ENCODE measurements at regions of chr9 and their contacts with region 1.

Region 1: DNA sequence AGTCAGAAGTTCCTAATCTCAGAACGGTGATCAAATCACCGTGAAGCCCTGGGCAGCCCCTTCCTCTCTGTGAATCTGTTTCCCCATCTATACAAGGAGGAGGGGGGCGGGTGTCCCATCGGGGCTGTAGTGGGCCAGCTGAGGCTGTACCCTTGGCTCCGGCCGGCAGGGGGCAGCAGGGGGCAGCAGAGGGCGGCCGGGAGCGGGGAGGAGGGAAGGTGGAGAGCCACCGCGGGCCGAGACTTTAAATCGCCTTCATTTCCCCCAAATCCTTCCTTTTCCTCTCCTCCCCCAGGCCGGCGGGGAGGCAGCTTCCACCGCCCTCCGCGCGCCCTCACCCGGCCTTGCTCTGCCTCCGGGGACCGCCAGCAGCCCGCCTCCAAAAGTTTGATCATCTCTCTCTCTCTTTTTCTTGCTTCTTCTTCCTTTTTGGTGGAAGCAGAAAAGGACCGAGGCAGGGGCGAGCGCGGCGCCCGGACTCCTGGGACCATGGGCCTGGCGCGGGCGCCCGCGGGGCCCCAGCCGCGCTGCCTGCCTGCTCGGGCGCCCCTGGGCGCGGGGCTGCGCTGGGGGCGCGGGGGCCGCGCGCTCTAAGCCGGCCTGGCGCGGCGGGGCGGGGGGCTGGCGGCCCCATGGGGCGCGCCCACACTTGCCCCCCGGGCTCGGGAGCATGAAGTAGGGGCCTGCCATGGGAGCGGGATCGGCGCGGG is at the start of gene COL27A1:
- DNase-seq: peak; percentile 87 to 90 (median 87)
- ATAC-seq: peak; percentile 82 to 85 (median 84)
- H3K4me3 ChIP-seq: peak within 1 kb of the TSS; percentile 60 to 70 (median 67)
- H3K27ac ChIP-seq: peak within 1 kb of the TSS; percentile 67 to 87 (median 85)
- H3K4me1 ChIP-seq: peaks cover 0 to 35% (median 4%) of the 10 kb centered on the region in 4 donors
- H3K27me3 ChIP-seq: no peaks in the 10 kb centered on the region
- CTCF ChIP-seq: peak; percentile 94 to 96 (median 95)
- POLR2A ChIP-seq: peak; percentile 27
- total RNA-seq, gene COL27A1: 11.8 to 51.9 (median 29.3) TPM

Region 2: GRCh38 chr9:114059047-114059803 is 96.2 kb before region 1 on chr9:
- intact Hi-C with region 1: no loop called
- DNase-seq: peak in 1 of 3 donors; percentile 63
- ATAC-seq: peak; percentile 29 to 68 (median 58)
- H3K4me3 ChIP-seq: no peak overlapping the region
- H3K27ac ChIP-seq: peak overlapping the region in 1 of 3 donors; percentile 49
- H3K4me1 ChIP-seq: peaks cover 0 to 6% (median 0%) of the 10 kb centered on the region in 4 donors
- H3K27me3 ChIP-seq: no peaks in the 10 kb centered on the region
- CTCF ChIP-seq: no peak
- POLR2A ChIP-seq: no peak

Region 3: DNA sequence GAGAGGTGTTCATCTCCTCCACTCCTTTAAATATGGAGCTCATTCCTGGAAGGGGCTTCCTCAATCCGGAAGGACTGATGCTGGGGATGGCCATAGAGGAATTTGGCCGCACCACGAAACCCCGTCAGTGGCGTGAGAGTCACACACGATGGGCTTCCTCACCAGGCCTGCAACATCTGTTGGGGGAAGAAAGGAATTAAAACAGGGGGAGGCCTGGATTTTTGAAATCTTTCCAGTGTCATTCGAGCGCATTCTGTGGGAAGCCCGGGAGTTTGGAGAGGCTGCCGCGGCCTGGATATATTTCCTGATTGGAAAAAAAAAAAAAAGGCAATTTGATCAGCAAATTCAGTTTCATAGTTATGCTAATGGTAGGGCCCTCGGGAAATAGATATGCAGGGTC is 91.1 kb after region 1 on chr9:
- intact Hi-C with region 1: loop called in 1 of 2 experiments (anchors 10 kb)
- DNase-seq: no peak
- ATAC-seq: no peak
- H3K4me3 ChIP-seq: no peak overlapping the region
- H3K27ac ChIP-seq: no peak overlapping the region
- H3K4me1 ChIP-seq: peaks cover 0 to 22% (median 13%) of the 10 kb centered on the region in 4 donors
- H3K27me3 ChIP-seq: no peaks in the 10 kb centered on the region
- CTCF ChIP-seq: no peak
- POLR2A ChIP-seq: no peak

Region 4: GRCh38 chr9:114304416-114305188 is 149.2 kb after region 1 on chr9:
- intact Hi-C with region 1: loop called in 1 of 2 experiments (anchors 5 kb)
- DNase-seq: peak in 1 of 3 donors; percentile 37
- ATAC-seq: no peak
- H3K4me3 ChIP-seq: no peak overlapping the region
- H3K27ac ChIP-seq: no peak overlapping the region
- H3K4me1 ChIP-seq: peaks cover 0 to 34% (median 0%) of the 10 kb centered on the region in 4 donors
- H3K27me3 ChIP-seq: no peaks in the 10 kb centered on the region
- CTCF ChIP-seq: no peak
- POLR2A ChIP-seq: no peak

Region 5: DNA sequence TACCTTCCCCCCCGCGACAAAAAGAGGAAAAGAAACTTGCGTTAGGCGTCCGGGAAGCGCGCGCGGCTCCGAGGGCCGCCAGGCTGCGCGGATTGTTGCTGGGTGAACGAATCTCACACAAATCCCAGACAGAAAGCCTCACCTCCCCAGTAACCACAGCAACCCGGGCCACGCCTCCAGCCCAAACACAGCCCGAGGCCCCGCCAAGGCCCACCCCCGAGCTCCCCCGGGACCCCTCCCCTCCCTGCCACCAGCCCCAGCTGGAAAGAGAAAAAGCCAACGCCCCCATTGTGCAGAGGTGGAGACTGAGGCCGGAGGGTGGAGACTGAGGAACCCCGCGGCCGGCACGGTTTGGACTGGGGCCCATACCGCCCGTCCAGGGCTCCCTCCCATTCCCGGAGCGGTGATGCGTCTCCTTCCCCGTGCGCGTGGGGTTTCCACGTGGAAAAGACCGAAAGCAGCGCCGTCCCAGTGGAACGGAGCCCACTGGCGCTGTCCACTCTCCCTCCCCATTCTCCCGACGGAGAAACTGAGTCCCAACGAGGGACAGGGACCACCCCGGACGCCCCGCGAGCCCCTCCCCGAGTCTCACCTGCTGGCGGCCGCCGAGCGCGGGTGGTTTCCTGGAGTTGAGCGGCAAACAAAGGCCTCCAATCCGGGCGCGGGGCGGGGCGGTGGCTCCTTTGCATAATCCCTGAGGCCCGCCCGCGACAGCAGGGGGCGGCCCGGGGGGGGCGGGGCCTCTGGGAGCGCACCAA is 242.6 kb after region 1 on chr9:
- intact Hi-C with region 1: no loop called
- DNase-seq: peak; percentile 98
- ATAC-seq: peak; percentile 88 to 94 (median 92)
- H3K4me3 ChIP-seq: peak overlapping the region; percentile 78 to 94 (median 82)
- H3K27ac ChIP-seq: peak overlapping the region; percentile 81 to 91 (median 90)
- H3K4me1 ChIP-seq: peaks cover 0 to 43% (median 13%) of the 10 kb centered on the region in 4 donors
- H3K27me3 ChIP-seq: no peaks in the 10 kb centered on the region
- CTCF ChIP-seq: peak in 1 of 4 donors; percentile 13
- POLR2A ChIP-seq: peak; percentile 85

Measured in right lobe of liver (tissue), 6 donors.